OCI-LY7 (cell line): ENCODE measurements at regions of chr10 and their contacts with region 1.

Region 1: DNA sequence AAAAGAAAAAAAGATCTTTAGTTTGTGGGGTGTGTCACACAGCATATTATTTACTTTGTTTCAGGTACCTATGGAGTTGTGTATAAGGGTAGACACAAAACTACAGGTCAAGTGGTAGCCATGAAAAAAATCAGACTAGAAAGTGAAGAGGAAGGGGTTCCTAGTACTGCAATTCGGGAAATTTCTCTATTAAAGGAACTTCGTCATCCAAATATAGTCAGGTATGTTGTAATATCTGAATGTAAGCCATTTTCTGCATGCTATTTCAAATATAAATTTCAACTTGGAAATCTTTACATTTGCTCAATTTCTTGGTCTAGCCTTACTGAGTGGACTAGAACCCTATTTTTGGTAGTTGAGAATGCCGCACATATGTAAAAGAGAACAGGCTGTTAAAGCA is 6.4 kb downstream of the CDK1 start:
- DNase-seq: no peak
- H3K4me3 ChIP-seq: no peak overlapping the region
- H3K27ac ChIP-seq: no peak overlapping the region
- H3K4me1 ChIP-seq: peaks cover 49% of the 10 kb centered on the region
- CTCF ChIP-seq: no peak

Region 2: DNA sequence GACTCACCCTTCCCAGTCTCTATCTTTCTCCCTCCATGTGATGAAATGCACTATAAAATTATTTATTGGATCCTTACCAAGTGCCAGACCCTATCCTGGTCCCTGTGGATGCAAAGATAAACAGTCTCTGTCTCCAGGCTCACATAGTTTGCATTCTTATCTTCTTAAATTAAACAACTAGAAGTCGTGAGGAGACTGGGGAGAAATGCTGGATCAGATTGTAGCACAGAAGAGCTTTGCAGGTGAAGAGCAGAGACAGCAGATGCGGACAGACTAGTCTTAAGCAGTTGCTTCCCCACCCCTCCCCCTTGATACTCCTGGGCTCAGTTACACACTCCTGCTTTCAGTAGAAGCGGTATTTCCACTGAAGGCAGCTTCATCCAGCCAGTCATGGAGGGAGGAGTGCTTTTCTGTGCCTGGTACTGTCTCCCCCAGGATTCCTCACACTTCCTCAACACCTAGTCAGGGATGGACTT is 27.2 kb before region 1 on chr10:
- CTCF ChIA-PET with region 1: no interaction called
- POLR2A ChIA-PET with region 1: no interaction called
- intact Hi-C with region 1: no loop called
- DNase-seq: no peak
- H3K4me3 ChIP-seq: no peak overlapping the region
- H3K27ac ChIP-seq: no peak overlapping the region
- H3K4me1 ChIP-seq: no peaks in the 10 kb centered on the region
- CTCF ChIP-seq: no peak

Region 3: DNA sequence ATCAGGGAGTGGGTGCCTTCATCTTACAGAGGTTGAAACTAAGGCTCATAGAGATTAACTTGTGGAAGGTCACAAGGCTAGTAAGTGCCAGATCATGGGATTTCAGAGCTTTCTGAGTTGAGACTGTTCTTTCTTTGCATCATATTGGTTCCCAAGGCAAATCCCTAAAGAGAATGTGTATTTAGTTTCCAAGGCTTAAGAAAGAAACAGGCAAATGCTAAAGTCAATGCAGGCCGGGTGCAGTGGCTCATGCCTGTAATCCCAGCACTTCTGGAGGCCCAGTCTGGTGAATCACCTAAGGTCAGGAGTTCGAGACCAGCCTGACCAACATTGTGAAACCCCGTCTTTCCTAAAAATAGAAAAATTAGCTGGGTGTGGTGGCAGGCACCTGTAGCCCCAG is 13.4 kb after region 1 on chr10:
- CTCF ChIA-PET with region 1: no interaction called
- POLR2A ChIA-PET with region 1: interaction called, 25 read pairs
- intact Hi-C with region 1: no loop called
- DNase-seq: no peak
- H3K4me3 ChIP-seq: no peak overlapping the region
- H3K27ac ChIP-seq: no peak overlapping the region
- H3K4me1 ChIP-seq: no peaks in the 10 kb centered on the region
- CTCF ChIP-seq: no peak